Activated CD4-positive, alpha-beta T cell treated with anti-CD3 and anti-CD28 coated beads, Interleukin-2, amount 10 ng/mL, durations not matched to agents 24 days and 14 days (primary cell): ENCODE measurements at regions of chr12 and their contacts with region 1.

Region 1: GRCh38 chr12:546921-547845 is 87.4 kb downstream of the B4GALNT3 start:
- DNase-seq: peak; percentile 93
- H3K4me3 Mint-ChIP-seq: peak overlapping the region; percentile 16
- H3K27ac Mint-ChIP-seq: no peak overlapping the region
- H3K4me1 Mint-ChIP-seq: peaks cover 28% of the 10 kb centered on the region
- H3K27me3 Mint-ChIP-seq: peaks cover 12% of the 10 kb centered on the region

Region 2: DNA sequence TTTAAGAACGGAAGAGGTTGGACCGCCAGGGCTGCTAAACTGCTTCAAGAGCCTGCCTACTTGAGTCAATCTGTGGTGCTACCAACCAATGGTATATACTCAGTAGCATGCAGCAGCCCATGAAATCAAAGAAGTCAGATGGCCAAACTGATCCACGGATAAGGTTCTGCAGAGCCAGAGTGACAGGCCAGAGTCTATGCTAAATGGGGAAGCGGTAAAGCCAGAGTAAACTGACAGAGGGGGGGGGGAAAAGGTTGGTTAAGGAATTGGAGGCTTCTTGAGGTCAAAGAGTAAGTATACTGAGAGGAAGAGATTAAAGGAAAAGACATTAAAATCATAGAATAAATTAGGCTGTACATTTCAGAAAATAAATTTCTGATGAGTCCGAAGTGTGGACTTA is 269.1 kb before region 1 on chr12:
- intact Hi-C with region 1: no loop called
- DNase-seq: no peak
- H3K4me3 Mint-ChIP-seq: no peak overlapping the region
- H3K27ac Mint-ChIP-seq: no peak overlapping the region
- H3K4me1 Mint-ChIP-seq: no peaks in the 10 kb centered on the region
- H3K27me3 Mint-ChIP-seq: no peaks in the 10 kb centered on the region

Region 3: GRCh38 chr12:442235-442884 is 104.8 kb before region 1 on chr12:
- intact Hi-C with region 1: loop called (anchors 2 kb)
- DNase-seq: peak; percentile 85
- H3K4me3 Mint-ChIP-seq: no peak overlapping the region
- H3K27ac Mint-ChIP-seq: no peak overlapping the region
- H3K4me1 Mint-ChIP-seq: no peaks in the 10 kb centered on the region
- H3K27me3 Mint-ChIP-seq: no peaks in the 10 kb centered on the region

Region 4: GRCh38 chr12:452667-453210 is 94.4 kb before region 1 on chr12:
- intact Hi-C with region 1: loop called (anchors 2 kb)
- DNase-seq: peak; percentile 94
- H3K4me3 Mint-ChIP-seq: no peak overlapping the region
- H3K27ac Mint-ChIP-seq: no peak overlapping the region
- H3K4me1 Mint-ChIP-seq: peaks cover 6% of the 10 kb centered on the region
- H3K27me3 Mint-ChIP-seq: peaks cover 38% of the 10 kb centered on the region

Region 5: GRCh38 chr12:1171657-1172408 is 624.6 kb after region 1 on chr12:
- intact Hi-C with region 1: no loop called
- DNase-seq: no peak
- H3K4me3 Mint-ChIP-seq: no peak overlapping the region
- H3K27ac Mint-ChIP-seq: no peak overlapping the region
- H3K4me1 Mint-ChIP-seq: no peaks in the 10 kb centered on the region
- H3K27me3 Mint-ChIP-seq: no peaks in the 10 kb centered on the region